Heart left ventricle (tissue), 16 donors: ENCODE measurements at regions of chr17 and their contacts with region 1.

Region 1: GRCh38 chr17:60049936-60050335 is 28.8 kb downstream of the HEATR6 start:
- DNase-seq: no peak
- ATAC-seq: no peak
- H3K4me3 ChIP-seq: no peak overlapping the region
- H3K27ac ChIP-seq: no peak overlapping the region
- H3K4me1 ChIP-seq: no peaks in the 10 kb centered on the region
- H3K27me3 ChIP-seq: no peaks in the 10 kb centered on the region
- CTCF ChIP-seq: no peak
- POLR2A ChIP-seq: no peak

Region 2: DNA sequence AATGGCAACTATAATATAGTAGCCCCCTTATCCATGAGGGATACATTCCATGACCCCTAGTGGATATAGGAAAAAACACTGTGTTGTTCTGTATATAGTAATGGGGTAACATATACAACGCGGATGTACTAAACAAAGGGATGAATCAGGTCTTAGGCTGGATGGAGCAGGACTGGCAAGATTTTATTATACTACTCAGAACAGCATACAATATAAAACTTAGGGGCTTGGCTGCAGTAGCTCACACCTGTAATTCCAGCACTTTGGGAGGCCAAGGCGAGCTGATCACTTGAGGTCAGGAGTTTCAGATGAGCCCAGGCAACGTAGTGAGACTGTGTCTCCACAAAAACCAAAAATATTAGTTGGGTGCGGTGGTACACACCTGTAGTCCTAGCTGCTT is 315.7 kb before region 1 on chr17:
- intact Hi-C with region 1: loop called in 2 of 10 experiments (anchors 5 to 10 kb)
- DNase-seq: no peak
- ATAC-seq: no peak
- H3K4me3 ChIP-seq: no peak overlapping the region
- H3K27ac ChIP-seq: no peak overlapping the region
- H3K4me1 ChIP-seq: peaks cover 0 to 15% (median 0%) of the 10 kb centered on the region in 12 donors
- H3K27me3 ChIP-seq: no peaks in the 10 kb centered on the region
- CTCF ChIP-seq: no peak
- POLR2A ChIP-seq: no peak